Heart left ventricle (tissue), 16 donors: ENCODE measurements at regions of chr2 and their contacts with region 1.

Region 1: GRCh38 chr2:118865106-118865505 is 17.7 kb upstream of the EN1 start:
- DNase-seq: no peak
- ATAC-seq: peak in 3 of 4 donors; percentile 78 to 82 (median 82)
- H3K4me3 ChIP-seq: no peak overlapping the region
- H3K27ac ChIP-seq: no peak overlapping the region
- H3K4me1 ChIP-seq: no peaks in the 10 kb centered on the region
- H3K27me3 ChIP-seq: peaks cover 11 to 59% (median 27%) of the 10 kb centered on the region in 9 donors
- CTCF ChIP-seq: peak; percentile 30 to 66 (median 53)
- POLR2A ChIP-seq: no peak

Region 2: DNA sequence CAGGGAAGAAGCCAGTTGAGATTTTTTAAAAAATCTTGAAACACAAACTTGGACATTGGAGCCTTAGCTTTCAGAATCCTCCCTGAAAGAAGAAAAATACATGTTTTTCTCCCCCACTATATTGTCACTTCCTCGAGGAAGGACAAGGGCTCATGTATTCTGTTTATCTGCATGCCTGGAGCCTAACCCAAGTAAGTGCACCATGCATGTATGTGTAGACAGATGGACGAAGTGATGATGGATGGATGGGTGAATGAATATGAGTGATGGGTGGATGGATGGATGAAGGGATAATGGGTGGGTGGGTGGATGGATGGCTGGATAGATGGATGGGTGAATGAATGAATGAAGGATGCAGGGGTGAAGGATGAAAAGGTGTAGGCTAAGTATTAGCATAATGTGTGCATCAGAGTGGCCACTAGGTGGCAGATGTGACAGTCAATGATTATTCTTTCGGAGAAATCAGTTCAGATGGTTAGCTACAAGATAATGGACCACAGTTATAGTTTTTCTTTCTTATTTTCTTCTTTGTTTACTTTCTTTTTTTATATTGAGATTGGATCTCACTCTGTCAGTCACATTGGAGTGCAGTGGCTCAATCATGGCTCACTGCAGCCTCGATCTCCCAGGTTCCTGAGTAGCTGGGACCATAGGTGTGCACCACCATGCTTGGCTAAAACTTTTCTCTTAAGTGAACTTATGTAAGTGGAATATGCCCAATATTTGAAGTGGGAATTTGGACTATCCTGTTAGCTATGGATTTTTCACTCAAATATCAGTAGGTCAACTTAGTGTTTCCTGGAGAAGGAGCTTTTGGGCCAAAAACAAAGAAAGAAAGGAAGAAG is 832.7 kb before region 1 on chr2:
- intact Hi-C with region 1: loop called in 2 of 10 experiments (anchors 5 kb)
- DNase-seq: no peak
- ATAC-seq: peak in 1 of 4 donors; percentile 33
- H3K4me3 ChIP-seq: no peak overlapping the region
- H3K27ac ChIP-seq: no peak overlapping the region
- H3K4me1 ChIP-seq: no peaks in the 10 kb centered on the region
- H3K27me3 ChIP-seq: peaks cover 0 to 30% (median 8%) of the 10 kb centered on the region in 9 donors
- CTCF ChIP-seq: peak; percentile 58 to 84 (median 74)
- POLR2A ChIP-seq: no peak

Region 3: DNA sequence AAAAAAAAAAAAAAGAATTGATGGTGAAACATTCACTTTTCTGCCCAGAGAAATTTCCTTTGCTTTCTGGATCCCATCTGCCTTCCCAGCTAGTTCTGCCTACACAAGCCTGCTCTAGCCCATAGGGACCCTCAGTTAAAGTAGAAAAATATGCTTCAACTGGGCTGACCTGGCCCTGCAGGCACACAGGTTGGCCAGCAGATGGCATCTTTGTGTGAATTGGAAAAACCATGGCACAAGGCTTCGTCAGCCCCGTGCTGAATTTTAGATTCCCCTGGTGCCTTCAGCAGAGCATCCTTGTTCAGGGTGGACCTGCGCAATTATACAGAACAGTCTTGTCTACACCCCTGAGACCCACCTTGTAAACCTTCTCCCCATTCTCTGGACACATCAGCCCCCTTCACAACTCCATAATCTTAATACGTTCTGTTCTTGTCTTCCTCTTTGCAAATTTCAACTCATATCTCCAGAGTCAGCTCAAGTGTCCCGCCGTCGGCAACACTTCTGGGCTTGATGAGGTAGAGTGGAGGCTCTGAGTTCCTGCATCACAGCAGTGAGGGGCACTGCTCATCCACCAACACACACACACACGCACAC is 662.3 kb before region 1 on chr2:
- intact Hi-C with region 1: loop called in 1 of 10 experiments (anchors 10 kb)
- DNase-seq: no peak
- ATAC-seq: peak in 3 of 4 donors; percentile 26 to 56 (median 46)
- H3K4me3 ChIP-seq: no peak overlapping the region
- H3K27ac ChIP-seq: no peak overlapping the region
- H3K4me1 ChIP-seq: no peaks in the 10 kb centered on the region
- H3K27me3 ChIP-seq: peaks cover 0 to 49% (median 6%) of the 10 kb centered on the region in 9 donors
- CTCF ChIP-seq: peak; percentile 50 to 84 (median 64)
- POLR2A ChIP-seq: no peak

Region 4: DNA sequence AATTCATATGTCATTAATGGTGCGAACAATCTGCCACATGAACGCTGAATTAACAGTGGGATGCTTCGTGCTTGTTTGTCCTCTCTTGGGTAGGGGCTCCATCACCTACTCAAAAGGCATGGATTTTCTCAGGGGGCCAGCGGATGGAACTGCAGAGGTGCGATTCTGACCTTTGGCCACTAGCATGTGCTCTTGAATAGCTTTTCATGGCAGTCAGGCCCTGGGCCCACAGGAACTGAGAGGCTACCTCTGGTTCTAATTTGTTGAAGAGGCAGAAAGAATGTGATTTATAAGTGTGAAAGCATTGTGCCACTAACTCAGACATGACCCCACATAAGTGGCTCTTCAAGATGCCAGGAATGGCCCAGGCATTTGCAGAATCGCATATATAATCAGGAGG is 493.6 kb before region 1 on chr2:
- intact Hi-C with region 1: loop called in 1 of 10 experiments (anchors 5 kb)
- DNase-seq: no peak
- ATAC-seq: peak in 1 of 4 donors; percentile 39
- H3K4me3 ChIP-seq: no peak overlapping the region
- H3K27ac ChIP-seq: no peak overlapping the region
- H3K4me1 ChIP-seq: no peaks in the 10 kb centered on the region
- H3K27me3 ChIP-seq: peaks cover 0 to 23% (median 2%) of the 10 kb centered on the region in 9 donors
- CTCF ChIP-seq: peak in 8 of 12 donors; percentile 12 to 49 (median 26)
- POLR2A ChIP-seq: no peak

Region 5: GRCh38 chr2:118830121-118830520 is 35.0 kb before region 1 on chr2:
- intact Hi-C with region 1: no loop called
- DNase-seq: no peak
- ATAC-seq: no peak
- H3K4me3 ChIP-seq: no peak overlapping the region
- H3K27ac ChIP-seq: no peak overlapping the region
- H3K4me1 ChIP-seq: peaks cover 0 to 4% (median under 1%) of the 10 kb centered on the region in 12 donors
- H3K27me3 ChIP-seq: peaks cover 21 to 100% (median 71%) of the 10 kb centered on the region in 9 donors
- CTCF ChIP-seq: no peak
- POLR2A ChIP-seq: no peak

Region 6: DNA sequence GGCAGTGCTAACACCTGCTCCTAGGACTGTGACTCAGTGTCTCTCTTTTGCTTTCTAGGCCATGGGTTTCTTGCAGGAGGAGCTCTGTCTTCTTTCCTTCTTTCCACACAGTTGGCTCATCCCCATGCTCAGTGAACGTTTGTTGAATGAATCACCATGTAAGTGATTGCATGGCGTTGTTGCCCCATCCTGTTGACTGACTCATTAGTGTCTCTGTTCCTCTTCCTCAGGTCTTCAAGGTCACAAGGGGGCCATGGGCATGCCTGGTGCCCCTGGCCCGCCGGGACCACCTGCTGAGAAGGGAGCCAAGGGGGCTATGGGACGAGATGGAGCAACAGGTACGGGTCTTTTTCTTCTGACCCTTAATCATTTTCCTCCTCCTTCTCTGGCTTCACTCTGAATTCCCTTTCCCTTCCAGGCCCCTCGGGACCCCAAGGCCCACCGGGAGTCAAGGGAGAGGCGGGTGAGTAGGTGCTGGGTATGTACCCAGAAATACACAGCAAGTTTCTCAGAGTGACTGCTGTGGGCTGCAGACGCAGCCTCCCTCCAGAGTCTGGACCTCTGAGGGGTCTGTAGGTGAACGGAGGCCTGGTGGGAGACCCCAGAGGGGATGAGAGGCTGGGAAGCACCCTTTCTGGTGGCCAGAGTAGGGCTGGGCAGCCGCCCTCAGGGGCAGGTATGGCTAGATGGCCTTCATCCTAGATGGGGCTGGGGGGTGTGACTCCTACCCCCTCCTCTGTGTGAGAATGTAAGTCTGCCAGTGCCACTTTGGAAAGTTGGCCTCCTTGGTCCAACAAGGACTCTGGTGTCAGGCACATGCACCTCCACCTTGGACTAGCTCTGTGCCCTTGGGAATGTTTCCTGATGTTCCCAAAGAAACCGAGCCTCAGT is 109.2 kb after region 1 on chr2:
- intact Hi-C with region 1: no loop called
- DNase-seq: peak in 1 of 5 donors; percentile 60
- ATAC-seq: peak in 2 of 4 donors; percentile 54 to 72
- H3K4me3 ChIP-seq: no peak overlapping the region
- H3K27ac ChIP-seq: peak overlapping the region in 1 of 12 donors; percentile 27
- H3K4me1 ChIP-seq: peaks cover 0 to 37% (median 0%) of the 10 kb centered on the region in 12 donors
- H3K27me3 ChIP-seq: peaks cover 0 to 32% (median 0%) of the 10 kb centered on the region in 9 donors
- CTCF ChIP-seq: no peak
- POLR2A ChIP-seq: no peak